Body of pancreas (tissue), 4 donors: ENCODE measurements at regions of chr5 and their contacts with region 1.

Region 1: GRCh38 chr5:10701567-10702039 is 59.4 kb downstream of the DAP start:
- DNase-seq: peak in 1 of 4 donors; percentile 40
- ATAC-seq: no peak
- H3K4me3 ChIP-seq: no peak overlapping the region
- H3K27ac ChIP-seq: peak overlapping the region; percentile 81 to 90 (median 86)
- H3K4me1 ChIP-seq: peaks cover 91% of the 10 kb centered on the region
- H3K27me3 ChIP-seq: no peaks in the 10 kb centered on the region
- CTCF ChIP-seq: peak; percentile 24 to 62 (median 47)
- POLR2A ChIP-seq: no peak

Region 2: GRCh38 chr5:10756549-10756948 is 54.9 kb after region 1 on chr5:
- intact Hi-C with region 1: loop called (anchors 10 kb)
- DNase-seq: no peak
- ATAC-seq: no peak
- H3K4me3 ChIP-seq: no peak overlapping the region
- H3K27ac ChIP-seq: peak overlapping the region in 3 of 4 donors; percentile 53 to 99 (median 57)
- H3K4me1 ChIP-seq: peaks cover 85% of the 10 kb centered on the region
- H3K27me3 ChIP-seq: no peaks in the 10 kb centered on the region
- CTCF ChIP-seq: no peak
- POLR2A ChIP-seq: no peak